ENCODE measurements at regions of chr2 and their contacts with region 1.

Region 1: GRCh38 chr2:238784671-238785527 is 63.0 kb upstream of the TWIST2 start:
- DNase-seq: peak; percentile 78
- ATAC-seq: peak; percentile 88 to 92

Region 2: GRCh38 chr2:238370823-238371372 is 414.0 kb before region 1 on chr2:
- intact Hi-C with region 1: loop called (anchors 2 to 10 kb)
- DNase-seq: peak; percentile 58
- ATAC-seq: peak; percentile 94 to 96

Region 3: DNA sequence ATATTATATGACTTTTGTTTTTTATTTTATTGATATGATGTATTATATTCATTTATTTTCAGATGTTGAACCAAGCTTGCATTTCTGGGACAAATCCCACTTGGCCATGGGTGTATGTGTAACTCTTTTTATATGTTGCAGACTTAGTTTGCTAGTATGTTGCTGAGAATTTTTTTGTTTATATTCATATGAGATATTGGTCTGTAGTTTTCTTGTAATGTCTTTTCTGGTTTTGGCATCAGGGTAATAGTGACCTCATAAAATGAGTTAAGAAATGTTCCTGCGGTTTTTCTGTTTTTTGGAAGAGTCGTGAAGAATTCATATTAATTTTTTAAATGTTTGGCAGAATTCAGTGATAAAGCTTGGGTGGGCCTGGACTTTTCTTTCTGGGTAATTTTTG is 269.5 kb before region 1 on chr2:
- intact Hi-C with region 1: loop called (anchors 2 to 5 kb)
- DNase-seq: no peak
- ATAC-seq: no peak

Region 4: GRCh38 chr2:238523158-238524110 is 261.5 kb before region 1 on chr2:
- intact Hi-C with region 1: loop called in 1 of 2 experiments (anchors 5 kb)
- DNase-seq: no peak
- ATAC-seq: peak; percentile 15 to 33

Region 5: GRCh38 chr2:238864207-238865014 is 79.5 kb after region 1 on chr2:
- intact Hi-C with region 1: no loop called
- DNase-seq: peak; percentile 89
- ATAC-seq: peak; percentile 85 to 95

Region 6: DNA sequence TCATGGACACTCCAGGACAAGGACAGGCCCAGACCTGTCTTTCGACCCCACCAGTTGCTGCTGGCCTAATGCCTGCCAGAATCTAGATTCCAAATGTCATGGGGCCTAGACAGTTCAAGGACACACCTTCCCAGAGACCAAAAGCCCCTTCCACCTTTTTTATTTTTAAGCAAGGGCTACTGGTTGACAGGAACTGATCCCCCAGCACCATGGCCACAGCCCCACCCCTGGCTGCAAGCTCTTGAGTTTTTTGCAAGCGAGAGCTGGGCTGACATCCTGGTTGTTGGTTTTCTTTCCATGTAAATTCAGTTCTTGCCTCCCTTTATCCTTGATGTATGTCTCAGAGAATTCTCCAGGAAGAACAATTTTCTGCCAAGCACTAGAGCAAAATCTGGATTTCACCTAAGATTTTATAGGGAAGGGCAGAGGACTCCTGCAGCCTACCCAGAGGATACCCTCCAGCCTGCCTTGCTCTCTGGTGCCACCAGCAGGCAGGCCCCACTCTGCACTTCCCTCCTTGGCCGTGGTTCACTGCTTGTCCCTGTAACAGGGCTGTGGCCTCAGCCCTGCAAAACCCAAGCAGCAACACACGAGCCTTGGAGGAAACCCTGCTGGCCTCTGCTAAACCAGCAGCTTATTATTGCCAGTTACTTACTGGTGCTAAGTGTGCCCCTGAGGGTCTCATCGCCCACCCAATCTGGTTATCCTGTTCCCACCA is 160.7 kb after region 1 on chr2:
- intact Hi-C with region 1: no loop called
- DNase-seq: peak; percentile 73
- ATAC-seq: peak; percentile 72 to 88

Measured in left cardiac atrium (tissue), 4 donors.